Activated naive CD4-positive, alpha-beta T cell treated with anti-CD3 and anti-CD28 coated beads for 36 hours (primary cell): ENCODE measurements at regions of chr20 and their contacts with region 1.

Region 1: GRCh38 chr20:19934792-19935491 is 82.2 kb upstream of the NAA20 start:
- DNase-seq: peak; percentile 10
- H3K4me3 Mint-ChIP-seq: no peak overlapping the region
- H3K27ac Mint-ChIP-seq: no peak overlapping the region
- H3K4me1 Mint-ChIP-seq: peaks cover 17% of the 10 kb centered on the region
- H3K27me3 Mint-ChIP-seq: peaks cover 7% of the 10 kb centered on the region

Region 2: GRCh38 chr20:19737025-19737424 is 197.9 kb before region 1 on chr20:
- CTCF ChIA-PET with region 1: no interaction called
- intact Hi-C with region 1: loop called (anchors 1 kb)
- DNase-seq: peak; percentile 42
- H3K4me3 Mint-ChIP-seq: no peak overlapping the region
- H3K27ac Mint-ChIP-seq: no peak overlapping the region
- H3K4me1 Mint-ChIP-seq: peaks cover 16% of the 10 kb centered on the region
- H3K27me3 Mint-ChIP-seq: peaks cover 21% of the 10 kb centered on the region